GM12878 (cell line): ENCODE measurements at regions of chr20 and their contacts with region 1.

Region 1: DNA sequence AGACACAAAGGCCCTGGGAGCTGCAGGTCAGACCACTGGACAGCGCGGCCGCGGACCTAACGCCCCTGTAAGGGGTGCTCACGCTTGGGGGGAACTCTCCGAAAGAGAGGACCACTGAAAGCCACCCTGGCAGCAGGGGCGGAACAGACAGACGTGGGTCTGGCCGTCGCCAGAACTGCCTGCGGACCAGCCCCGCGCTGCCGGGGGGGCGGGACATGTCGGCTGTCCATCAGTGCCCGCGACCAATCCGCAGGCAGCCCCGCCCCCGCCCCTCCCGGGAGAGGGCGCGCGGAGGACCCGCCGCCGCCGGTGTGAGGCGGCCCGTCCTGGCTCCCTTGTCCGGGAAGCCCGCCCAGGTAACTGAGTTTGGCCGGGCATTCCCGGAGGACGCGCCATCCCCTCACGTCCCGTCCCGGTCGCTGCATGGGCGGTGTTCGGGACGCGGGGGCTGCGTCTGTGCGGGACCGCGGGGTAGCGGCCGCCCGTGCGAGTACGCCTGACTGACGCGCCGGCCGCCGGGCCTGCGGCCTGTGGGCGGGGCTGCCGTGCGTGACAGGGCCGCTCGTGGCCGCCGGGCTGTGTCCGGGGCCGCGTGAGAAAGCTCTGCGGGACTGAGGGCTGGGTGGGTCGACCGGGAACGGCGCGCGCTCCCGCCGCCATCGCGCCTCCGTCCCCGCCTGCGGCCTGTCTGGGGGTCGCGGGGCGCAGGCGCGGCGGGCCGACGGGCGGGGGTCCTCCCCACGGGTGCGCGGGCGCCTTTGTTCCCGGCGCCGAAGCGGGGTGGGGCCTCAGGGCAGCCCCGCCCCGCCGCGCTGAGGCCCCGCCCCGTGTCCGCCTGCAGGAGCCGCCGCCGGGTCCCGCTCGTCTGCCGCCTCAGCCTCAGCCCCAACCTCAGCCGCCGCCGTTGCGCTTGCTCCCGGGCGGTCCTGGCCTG is at the start of gene PLCG1:
- DNase-seq: no peak
- ATAC-seq: peak; percentile 63
- H3K4me3 ChIP-seq: peak within 1 kb of the TSS; percentile 81
- H3K27ac ChIP-seq: peak within 1 kb of the TSS; percentile 88
- H3K4me1 ChIP-seq: peaks cover 56% of the 10 kb centered on the region
- H3K27me3 ChIP-seq: no peaks in the 10 kb centered on the region
- CTCF ChIP-seq: no peak
- EP300 ChIP-seq: no peak
- POLR2A ChIP-seq: peak; percentile 65
- RAD21 ChIP-seq: no peak
- polyA plus RNA-seq, gene PLCG1: 2.6 to 3.0 TPM

Region 2: DNA sequence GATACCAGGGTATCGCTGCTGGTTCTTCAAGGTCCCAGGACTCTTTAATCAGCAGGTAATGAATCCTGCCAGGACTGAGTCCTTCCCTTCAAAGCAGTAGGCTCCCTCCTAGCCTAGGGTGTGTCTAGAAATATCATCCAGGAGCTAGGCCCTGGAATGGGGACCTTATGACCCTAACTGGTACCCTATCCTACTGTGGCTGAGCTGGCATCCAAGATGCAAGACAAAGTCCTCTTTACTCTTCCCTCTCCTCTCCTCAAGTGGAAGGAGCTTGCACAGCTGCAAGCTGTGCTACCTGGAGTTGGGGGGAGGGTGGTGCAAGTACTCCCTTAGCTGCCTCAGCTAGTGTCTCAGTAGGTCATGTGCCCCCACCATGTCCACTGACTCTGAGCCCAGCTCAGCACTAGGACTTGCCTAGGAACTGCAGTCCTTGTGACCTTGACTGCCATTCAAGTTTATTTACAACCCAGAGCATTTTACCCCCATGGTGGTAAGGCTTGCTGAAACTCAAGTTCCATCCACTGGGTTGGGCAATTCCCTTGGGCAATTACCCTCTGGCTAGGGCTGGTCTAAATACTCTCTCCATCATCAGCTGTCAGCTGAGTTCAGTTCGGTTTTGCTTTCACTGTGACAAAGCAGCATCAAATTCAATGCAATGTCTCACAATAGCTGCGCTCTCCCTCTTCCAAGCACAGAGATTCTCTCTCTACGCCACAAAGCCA is 156.7 kb before region 1 on chr20:
- CTCF ChIA-PET with region 1: interaction called, 25 read pairs
- POLR2A ChIA-PET with region 1: interaction called, 10 read pairs
- RAD21 ChIA-PET with region 1: interaction called, 11 read pairs
- SMC1A ChIA-PET with region 1: interaction called, 20 read pairs
- in situ Hi-C with region 1: no loop called
- intact Hi-C with region 1: no loop called
- DNase-seq: peak; percentile 83
- ATAC-seq: peak; percentile 86
- H3K4me3 ChIP-seq: peak overlapping the region; percentile 20; the same call in 1 of the 2 replicates
- H3K27ac ChIP-seq: peak overlapping the region; percentile 75
- H3K4me1 ChIP-seq: peaks cover 32% of the 10 kb centered on the region
- H3K27me3 ChIP-seq: no peaks in the 10 kb centered on the region
- CTCF ChIP-seq: no peak
- EP300 ChIP-seq: peak; percentile 6 to 48; a peak in 2 of 4 replicates
- POLR2A ChIP-seq: 0 out of 2 replicates have a peak, but pooled peaks have one; percentile 39
- RAD21 ChIP-seq: 0 out of 2 replicates have a peak, but pooled peaks have one; percentile 23

Region 3: GRCh38 chr20:41119546-41120235 is 17.3 kb before region 1 on chr20:
- CTCF ChIA-PET with region 1: interaction called, 16 read pairs
- POLR2A ChIA-PET with region 1: interaction called, 4 read pairs
- RAD21 ChIA-PET with region 1: interaction called, 7 read pairs
- SMC1A ChIA-PET with region 1: interaction called, 8 read pairs
- in situ Hi-C with region 1: no loop called
- intact Hi-C with region 1: no loop called
- DNase-seq: no peak
- ATAC-seq: no peak
- H3K4me3 ChIP-seq: no peak overlapping the region
- H3K27ac ChIP-seq: no peak overlapping the region
- H3K4me1 ChIP-seq: no peaks in the 10 kb centered on the region
- H3K27me3 ChIP-seq: no peaks in the 10 kb centered on the region
- CTCF ChIP-seq: no peak
- EP300 ChIP-seq: no peak
- POLR2A ChIP-seq: no peak
- RAD21 ChIP-seq: no peak

Region 4: DNA sequence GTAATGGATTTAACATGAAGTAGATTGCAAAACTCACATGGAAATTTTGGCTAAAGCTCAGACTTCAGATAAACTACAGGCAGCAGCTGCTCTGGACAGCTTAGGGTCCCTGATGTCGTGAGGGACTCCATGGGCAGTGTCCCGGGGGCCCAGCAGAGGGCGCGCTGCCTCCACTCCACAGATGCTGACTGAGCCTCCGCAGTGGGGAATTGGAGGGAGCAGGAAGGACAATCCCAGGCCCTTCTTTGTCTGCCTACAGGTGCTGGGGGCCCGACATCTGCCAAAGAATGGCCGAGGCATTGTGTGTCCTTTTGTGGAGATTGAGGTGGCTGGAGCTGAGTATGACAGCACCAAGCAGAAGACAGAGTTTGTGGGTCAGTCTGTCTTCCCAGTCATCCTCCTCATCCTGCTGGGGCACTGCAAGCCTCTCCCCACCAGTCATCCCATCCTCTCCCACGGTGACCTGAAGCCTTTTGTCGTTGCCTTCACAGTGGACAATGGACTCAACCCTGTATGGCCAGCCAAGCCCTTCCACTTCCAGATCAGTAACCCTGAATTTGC is 36.3 kb after region 1 on chr20:
- CTCF ChIA-PET with region 1: interaction called, 52 read pairs
- POLR2A ChIA-PET with region 1: interaction called, 4 read pairs
- RAD21 ChIA-PET with region 1: interaction called, 25 read pairs
- SMC1A ChIA-PET with region 1: interaction called, 27 read pairs
- in situ Hi-C with region 1: no loop called
- intact Hi-C with region 1: no loop called
- DNase-seq: no peak
- ATAC-seq: peak; percentile 97
- H3K4me3 ChIP-seq: no peak overlapping the region
- H3K27ac ChIP-seq: no peak overlapping the region
- H3K4me1 ChIP-seq: no peaks in the 10 kb centered on the region
- H3K27me3 ChIP-seq: no peaks in the 10 kb centered on the region
- CTCF ChIP-seq: peak; percentile 87 to 94 (median 92)
- EP300 ChIP-seq: no peak
- POLR2A ChIP-seq: no peak
- RAD21 ChIP-seq: peak; percentile 90

Region 5: GRCh38 chr20:41317536-41318270 is 180.8 kb after region 1 on chr20 and contains the start of gene ZHX3:
- CTCF ChIA-PET with region 1: interaction called, 4 read pairs
- POLR2A ChIA-PET with region 1: no interaction called
- RAD21 ChIA-PET with region 1: no interaction called
- SMC1A ChIA-PET with region 1: no interaction called
- in situ Hi-C with region 1: no loop called
- intact Hi-C with region 1: loop called (anchors 5 kb)
- DNase-seq: peak; percentile 78
- ATAC-seq: peak; percentile 99
- H3K4me3 ChIP-seq: peak within 1 kb of the TSS; percentile 96
- H3K27ac ChIP-seq: peak within 1 kb of the TSS; percentile 61
- H3K4me1 ChIP-seq: peaks cover 3% of the 10 kb centered on the region; the same call in 1 of the 2 replicates
- H3K27me3 ChIP-seq: no peaks in the 10 kb centered on the region
- CTCF ChIP-seq: no peak
- EP300 ChIP-seq: no peak
- POLR2A ChIP-seq: peak; percentile 60; the same call in 1 of the 2 replicates
- RAD21 ChIP-seq: no peak
- polyA plus RNA-seq, gene ZHX3: 1.3 to 1.4 TPM